Astrocyte of the cerebellum (primary cell): ENCODE measurements at regions of chr2 and their contacts with region 1.

Region 1: DNA sequence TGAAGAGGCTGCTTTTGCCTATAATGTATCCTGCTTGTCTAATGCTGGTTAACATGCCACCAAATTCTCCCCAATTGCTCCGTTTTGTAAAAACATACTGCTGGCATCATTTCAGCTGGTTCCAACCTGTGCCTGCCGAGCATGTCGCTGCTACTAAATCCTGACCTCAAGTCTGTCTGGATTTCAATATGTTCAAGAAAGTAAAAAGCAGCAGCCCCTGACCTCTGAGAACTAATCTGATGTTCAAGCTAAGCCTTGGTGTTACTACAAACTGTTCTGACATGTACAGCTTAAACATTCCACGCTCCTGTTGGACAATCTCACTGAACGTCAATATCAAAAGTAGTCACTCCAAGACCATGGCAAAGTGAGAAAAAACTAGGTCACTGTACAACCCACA is 46.3 kb downstream of the SFT2D3 start:
- DNase-seq: no peak
- H3K4me3 ChIP-seq: no peak overlapping the region
- CTCF ChIP-seq: no peak

Region 2: GRCh38 chr2:127807678-127808353 is 60.2 kb after region 1 on chr2:
- in situ Hi-C with region 1: loop called (anchors 5 kb)
- DNase-seq: no peak
- H3K4me3 ChIP-seq: no peak overlapping the region
- CTCF ChIP-seq: no peak